SK-N-SH (cell line): ENCODE measurements at regions of chr16 and their contacts with region 1.

Region 1: DNA sequence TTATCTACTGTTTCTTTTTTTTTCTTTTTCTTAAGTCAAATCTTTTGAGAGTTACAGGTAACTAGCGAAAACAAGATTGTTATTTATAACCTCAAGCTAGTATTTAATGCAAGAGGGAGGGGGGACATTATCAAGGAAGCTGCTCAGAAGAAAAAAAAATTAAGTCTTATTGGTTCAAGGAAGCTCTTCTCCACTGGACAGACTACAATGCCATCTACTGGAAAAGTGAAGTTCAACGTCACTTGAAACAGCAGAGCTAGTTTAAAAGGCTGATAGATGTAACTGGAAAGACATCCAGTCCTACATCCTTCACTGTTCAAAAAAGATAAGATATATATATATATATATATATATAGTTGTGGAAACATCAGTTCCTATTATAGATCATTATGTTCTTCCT is 418.0 kb upstream of the PSMD7 start:
- DNase-seq: peak; percentile 46
- H3K4me3 ChIP-seq: no peak overlapping the region; a peak in 1 of 4 replicates
- H3K27ac ChIP-seq: no peak overlapping the region
- H3K4me1 ChIP-seq: peaks cover 0 to 3% of the 10 kb centered on the region in 2 experiments; a peak in 2 of 4 replicates
- H3K27me3 ChIP-seq: no peaks in the 10 kb centered on the region
- CTCF ChIP-seq: peak; percentile 66
- EP300 ChIP-seq: no peak
- RAD21 ChIP-seq: peak; percentile 94

Region 2: DNA sequence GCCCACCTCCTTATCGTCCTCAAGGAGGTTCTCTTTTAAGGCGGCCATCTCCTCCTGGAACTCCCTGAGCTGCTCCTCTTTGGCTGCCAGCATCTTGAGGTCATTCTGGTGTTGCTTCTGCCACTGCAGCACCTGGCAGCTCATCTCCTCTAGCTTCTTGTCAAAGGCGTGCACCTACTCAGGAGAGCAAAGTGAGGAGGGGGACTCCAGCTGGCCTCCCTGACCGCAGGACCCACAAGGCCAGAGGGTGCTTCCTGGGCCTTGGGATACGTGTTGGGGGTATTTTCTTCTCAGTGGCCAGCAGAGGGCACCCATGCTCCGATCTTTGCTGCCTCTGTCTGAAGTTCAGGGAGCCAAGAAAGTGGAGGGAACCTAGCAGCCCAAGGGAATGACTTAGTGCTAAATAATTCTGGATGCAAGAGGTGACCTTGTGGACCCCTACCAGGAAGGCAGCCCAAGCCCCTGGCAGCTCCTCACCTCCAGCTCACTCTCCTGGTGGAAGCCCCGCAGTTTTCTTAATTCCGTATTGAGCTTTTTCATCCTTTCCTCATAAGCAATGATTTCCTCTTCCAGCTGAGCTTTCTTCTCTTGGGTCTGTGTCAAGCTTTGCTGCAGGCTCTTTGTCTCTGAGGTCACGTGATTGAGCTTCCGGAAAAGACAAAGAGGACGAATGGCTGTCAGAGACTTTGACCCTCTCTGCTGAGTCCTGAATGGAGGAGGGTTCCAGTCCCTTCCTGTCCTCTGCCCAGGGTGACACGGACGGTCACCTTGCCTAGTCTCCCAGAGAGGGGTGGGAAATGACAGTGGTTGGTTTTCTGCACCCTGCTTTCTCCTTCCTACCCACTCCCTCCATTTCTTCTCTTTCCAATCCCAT is 1753.6 kb before region 1 on chr16:
- CTCF ChIA-PET with region 1: interaction called, 11 read pairs
- POLR2A ChIA-PET with region 1: no interaction called
- DNase-seq: peak; percentile 80
- H3K4me3 ChIP-seq: no peak overlapping the region; a peak in 1 of 4 replicates
- H3K27ac ChIP-seq: no peak overlapping the region
- H3K4me1 ChIP-seq: peaks cover 0 to 7% of the 10 kb centered on the region in 2 experiments; a peak in 1 of 4 replicates
- H3K27me3 ChIP-seq: no peaks in the 10 kb centered on the region
- CTCF ChIP-seq: peak; percentile 78
- EP300 ChIP-seq: no peak
- RAD21 ChIP-seq: peak; percentile 91

Region 3: GRCh38 chr16:73546349-73546845 is 332.2 kb before region 1 on chr16:
- CTCF ChIA-PET with region 1: interaction called, 10 read pairs
- POLR2A ChIA-PET with region 1: no interaction called
- DNase-seq: peak; percentile 71
- H3K4me3 ChIP-seq: peak overlapping the region in 1 of 2 experiments; percentile 31; a peak in 2 of 4 replicates
- H3K27ac ChIP-seq: peak overlapping the region in 1 of 2 experiments; percentile 24; a peak in 2 of 4 replicates
- H3K4me1 ChIP-seq: peaks cover 0 to 14% of the 10 kb centered on the region in 2 experiments; a peak in 2 of 4 replicates
- H3K27me3 ChIP-seq: no peaks in the 10 kb centered on the region; the same call in 1 of the 2 replicates
- CTCF ChIP-seq: no peak
- EP300 ChIP-seq: no peak
- RAD21 ChIP-seq: no peak

Region 4: GRCh38 chr16:73743665-73744496 is 134.7 kb before region 1 on chr16:
- CTCF ChIA-PET with region 1: interaction called, 16 read pairs
- POLR2A ChIA-PET with region 1: no interaction called
- DNase-seq: peak; percentile 44
- H3K4me3 ChIP-seq: no peak overlapping the region
- H3K27ac ChIP-seq: no peak overlapping the region
- H3K4me1 ChIP-seq: peaks cover 0 to 9% of the 10 kb centered on the region in 2 experiments; a peak in 2 of 4 replicates
- H3K27me3 ChIP-seq: no peaks in the 10 kb centered on the region
- CTCF ChIP-seq: peak; percentile 17; the same call in 1 of the 2 replicates
- EP300 ChIP-seq: peak in 1 of 2 experiments; percentile 94; a peak in 2 of 4 replicates
- RAD21 ChIP-seq: peak; percentile 75

Region 5: DNA sequence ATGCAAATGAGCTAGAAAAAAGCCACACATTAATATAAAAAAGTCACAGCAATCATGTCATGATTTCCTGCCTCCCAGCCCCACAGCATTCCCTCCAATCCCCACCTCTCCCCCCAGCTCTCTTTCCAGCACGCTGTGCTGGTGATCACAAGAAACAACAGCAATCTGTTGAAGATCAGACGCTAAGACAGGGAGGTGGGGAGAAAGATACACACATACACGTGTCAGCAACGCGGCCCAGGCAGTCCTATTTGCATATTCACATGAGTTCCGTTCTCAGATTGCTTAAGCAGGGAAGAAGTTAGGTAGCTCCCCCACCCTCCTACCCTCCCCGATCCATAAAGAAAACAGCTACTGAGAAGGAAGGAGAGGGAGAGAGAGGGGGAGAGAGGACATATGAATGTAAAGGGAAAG is 12.5 kb after region 1 on chr16:
- CTCF ChIA-PET with region 1: interaction called, 14 read pairs
- POLR2A ChIA-PET with region 1: no interaction called
- DNase-seq: no peak
- H3K4me3 ChIP-seq: peak overlapping the region in 1 of 2 experiments; percentile 2; a peak in 1 of 4 replicates
- H3K27ac ChIP-seq: no peak overlapping the region
- H3K4me1 ChIP-seq: peaks cover 0 to 3% of the 10 kb centered on the region in 2 experiments; a peak in 1 of 4 replicates
- H3K27me3 ChIP-seq: no peaks in the 10 kb centered on the region; the same call in 1 of the 2 replicates
- CTCF ChIP-seq: no peak
- EP300 ChIP-seq: no peak
- RAD21 ChIP-seq: no peak

Region 6: DNA sequence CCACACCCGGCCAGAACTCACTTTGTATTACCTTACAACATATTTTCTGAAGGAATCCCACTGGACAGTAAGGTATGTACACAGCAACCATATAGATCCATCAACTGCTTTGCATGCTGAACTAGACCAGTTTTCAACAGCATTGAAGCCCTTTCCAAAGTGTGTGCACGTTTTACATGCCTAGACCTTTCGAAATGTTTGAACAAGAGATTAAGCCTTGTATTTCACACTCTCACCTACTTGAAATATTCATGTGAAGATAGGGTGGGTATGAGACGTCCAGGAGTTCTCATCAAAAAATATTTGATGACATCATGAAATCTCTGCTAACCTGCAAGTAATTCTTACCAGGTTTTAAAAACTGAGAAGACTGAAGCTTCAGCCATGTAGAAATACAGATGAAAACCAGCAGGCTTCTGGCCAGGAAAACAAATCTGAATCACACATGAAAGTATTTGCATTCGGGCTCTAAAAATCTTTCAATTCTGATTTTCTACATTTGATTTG is 31.0 kb after region 1 on chr16:
- CTCF ChIA-PET with region 1: no interaction called
- POLR2A ChIA-PET with region 1: no interaction called
- DNase-seq: no peak
- H3K4me3 ChIP-seq: no peak overlapping the region
- H3K27ac ChIP-seq: no peak overlapping the region
- H3K4me1 ChIP-seq: no peaks in the 10 kb centered on the region
- H3K27me3 ChIP-seq: no peaks in the 10 kb centered on the region
- CTCF ChIP-seq: no peak
- EP300 ChIP-seq: no peak
- RAD21 ChIP-seq: no peak